Activated B cell treated with CpG ODN at 0.5 μM for 24 hours (primary cell): ENCODE measurements at regions of chr2 and their contacts with region 1.

Region 1: GRCh38 chr2:68909793-68910674 is 38.8 kb upstream of the BMP10 start:
- DNase-seq: peak; percentile 45
- ATAC-seq: peak; percentile 58
- H3K4me3 Mint-ChIP-seq: no peak overlapping the region
- H3K27ac Mint-ChIP-seq: peak overlapping the region; percentile 60
- H3K4me1 Mint-ChIP-seq: peaks cover 34% of the 10 kb centered on the region
- H3K27me3 Mint-ChIP-seq: no peaks in the 10 kb centered on the region
- CTCF ChIP-seq: no peak

Region 2: DNA sequence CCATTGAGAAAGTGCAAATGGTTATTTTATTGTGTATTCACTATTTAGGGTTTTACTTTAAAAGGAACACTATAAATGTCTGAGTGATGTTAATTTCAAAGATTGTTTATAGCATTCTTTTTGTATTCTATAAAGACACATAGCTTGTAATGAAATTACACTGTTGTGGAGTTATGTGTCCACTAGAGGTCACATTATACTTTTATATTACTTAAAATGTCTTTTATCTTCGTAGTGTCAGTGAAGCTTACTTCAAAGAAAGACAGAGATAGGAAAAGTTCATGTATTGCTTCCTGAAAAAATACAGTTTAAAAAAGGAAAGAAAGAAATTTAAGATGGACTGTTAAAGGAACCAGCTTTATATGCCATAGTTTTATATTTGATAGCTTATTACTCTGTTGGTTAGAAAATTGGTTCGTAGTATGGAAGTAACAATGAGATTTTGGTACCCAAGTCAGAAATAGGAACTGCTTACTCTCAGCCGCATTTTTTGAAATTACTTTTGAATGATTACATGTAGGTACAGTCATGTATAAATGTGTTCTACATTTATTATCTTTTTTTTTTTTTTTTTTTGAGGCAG is 422.2 kb before region 1 on chr2:
- CTCF ChIA-PET with region 1: interaction called, 28 read pairs
- POLR2A ChIA-PET with region 1: interaction called, 15 read pairs
- intact Hi-C with region 1: loop called (anchors 1 kb)
- DNase-seq: no peak
- ATAC-seq: peak; percentile 54
- H3K4me3 Mint-ChIP-seq: no peak overlapping the region
- H3K27ac Mint-ChIP-seq: no peak overlapping the region
- H3K4me1 Mint-ChIP-seq: peaks cover 5% of the 10 kb centered on the region
- H3K27me3 Mint-ChIP-seq: no peaks in the 10 kb centered on the region
- CTCF ChIP-seq: peak; percentile 39

Region 3: DNA sequence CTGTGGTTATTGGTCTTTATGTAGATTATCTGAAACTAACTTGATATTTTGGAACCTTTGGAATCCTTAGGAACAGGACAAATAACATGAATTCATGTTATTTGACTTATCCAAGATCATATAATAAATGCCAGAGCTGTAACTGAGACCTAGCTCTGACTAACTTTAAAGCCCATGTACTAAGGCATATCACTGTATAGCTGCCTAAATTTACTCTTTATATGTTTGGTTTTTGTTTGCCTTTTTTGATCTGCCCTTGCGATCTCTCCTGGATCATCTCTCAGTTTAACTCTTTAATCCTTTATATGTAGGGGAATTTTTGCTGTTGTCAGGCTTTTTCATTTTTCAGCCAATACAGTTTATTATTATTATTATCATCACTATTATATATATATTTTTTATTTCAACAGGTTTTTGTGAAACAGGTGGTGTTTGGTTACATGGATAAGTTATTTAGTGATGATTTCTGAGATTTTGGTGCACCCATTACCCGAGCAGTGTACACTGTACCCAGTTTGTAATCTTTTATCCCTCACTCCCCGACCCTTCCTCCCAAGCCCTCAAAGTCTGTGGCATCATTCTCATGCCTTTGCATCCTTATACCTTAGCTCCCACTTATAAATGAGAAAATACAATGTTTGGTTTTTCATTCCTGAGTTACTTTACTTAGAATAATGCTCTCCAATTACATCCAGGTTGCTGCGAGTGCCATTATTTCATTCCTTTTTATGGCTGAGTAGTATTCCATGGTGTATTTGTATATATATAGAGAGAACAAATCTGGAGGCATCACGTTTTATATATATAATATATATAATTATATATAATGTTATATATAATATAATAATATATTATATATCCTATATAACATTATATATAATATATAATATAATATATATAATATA is 393.7 kb before region 1 on chr2:
- CTCF ChIA-PET with region 1: no interaction called
- POLR2A ChIA-PET with region 1: no interaction called
- intact Hi-C with region 1: no loop called
- DNase-seq: no peak
- ATAC-seq: no peak
- H3K4me3 Mint-ChIP-seq: no peak overlapping the region
- H3K27ac Mint-ChIP-seq: no peak overlapping the region
- H3K4me1 Mint-ChIP-seq: no peaks in the 10 kb centered on the region
- H3K27me3 Mint-ChIP-seq: no peaks in the 10 kb centered on the region
- CTCF ChIP-seq: no peak

Region 4: DNA sequence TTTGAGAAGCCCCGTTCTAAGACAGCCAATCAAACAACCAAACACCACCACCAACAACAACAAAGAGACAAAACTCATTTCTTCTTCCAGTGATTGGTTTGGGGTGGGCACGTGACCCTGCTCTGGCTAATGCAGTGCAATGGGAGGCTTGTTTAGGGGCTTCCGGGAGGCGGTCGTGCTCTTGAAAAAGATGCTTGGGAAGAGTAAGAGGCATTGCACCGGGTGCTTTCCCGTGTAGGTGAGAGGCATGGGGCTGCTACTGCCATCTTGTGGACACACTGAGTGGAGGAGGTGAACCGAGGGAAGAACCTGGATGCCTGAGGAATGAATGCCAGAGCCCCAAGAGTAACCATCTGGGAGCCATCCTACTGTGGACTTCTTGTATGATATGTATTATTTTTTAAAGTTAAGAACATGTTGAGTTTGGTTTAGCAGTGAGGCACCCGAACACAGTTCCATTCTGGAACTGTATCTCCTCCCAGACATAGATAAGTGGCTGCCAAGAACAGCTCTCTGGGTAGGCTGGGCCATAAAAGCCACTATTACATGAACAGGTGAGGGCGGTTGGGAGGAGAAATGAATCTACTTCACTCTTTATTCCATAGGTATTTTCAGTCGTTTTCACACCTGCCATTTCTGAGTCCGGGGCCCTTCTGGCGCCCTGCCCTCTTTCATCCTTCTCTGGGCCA is 194.5 kb before region 1 on chr2:
- CTCF ChIA-PET with region 1: interaction called, 72 read pairs
- POLR2A ChIA-PET with region 1: interaction called, 9 read pairs
- intact Hi-C with region 1: loop called (anchors 1 kb)
- DNase-seq: no peak
- ATAC-seq: peak; percentile 51
- H3K4me3 Mint-ChIP-seq: peak overlapping the region; percentile 21
- H3K27ac Mint-ChIP-seq: peak overlapping the region; percentile 89
- H3K4me1 Mint-ChIP-seq: peaks cover 82% of the 10 kb centered on the region
- H3K27me3 Mint-ChIP-seq: no peaks in the 10 kb centered on the region
- CTCF ChIP-seq: no peak

Region 5: DNA sequence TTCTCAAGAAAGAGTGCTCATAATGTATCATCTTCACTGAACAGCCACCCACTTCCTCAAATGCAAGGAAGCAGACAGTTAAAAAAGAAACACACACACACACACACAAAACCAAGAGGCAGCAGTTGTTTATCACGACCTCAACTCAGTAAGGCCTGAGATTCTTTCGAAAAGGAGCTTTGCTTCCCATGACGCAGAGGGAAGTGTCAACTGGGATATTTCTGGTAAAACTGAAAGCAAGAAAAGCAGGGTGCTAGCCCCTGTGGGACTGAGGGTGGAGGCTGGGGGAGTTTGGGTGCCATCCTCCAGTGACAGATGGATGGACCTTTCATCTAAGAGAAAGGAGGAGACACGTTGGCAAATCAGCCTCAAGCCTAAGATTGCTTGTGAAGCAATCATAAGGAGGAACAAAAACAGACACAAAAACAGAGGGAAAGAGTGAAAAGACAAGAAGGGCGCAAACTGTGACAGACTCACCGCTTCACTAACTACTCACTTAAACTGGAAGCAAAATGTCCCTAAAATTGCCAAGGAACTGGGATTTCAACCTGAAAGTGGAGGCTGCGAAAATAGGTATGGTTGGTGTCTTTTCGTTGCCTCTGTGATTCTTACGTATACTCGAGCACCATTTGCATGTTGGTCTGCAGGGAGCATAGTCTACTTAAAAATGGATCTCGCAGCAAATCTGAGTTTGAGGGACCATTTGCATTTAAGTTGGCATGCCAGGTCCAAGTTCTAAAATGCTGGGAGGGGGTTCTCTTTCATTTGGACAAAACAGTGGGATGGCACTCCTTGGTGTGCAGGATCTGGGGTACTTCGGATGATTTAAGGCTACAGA is 175.1 kb before region 1 on chr2 and contains the start of gene ARHGAP25:
- CTCF ChIA-PET with region 1: interaction called, 6 read pairs
- POLR2A ChIA-PET with region 1: interaction called, 32 read pairs
- intact Hi-C with region 1: loop called (anchors 1 kb)
- DNase-seq: peak; percentile 45
- ATAC-seq: peak; percentile 74
- H3K4me3 Mint-ChIP-seq: no peak within 1 kb of the TSS
- H3K27ac Mint-ChIP-seq: no peak within 1 kb of the TSS
- H3K4me1 Mint-ChIP-seq: peaks cover 37% of the 10 kb centered on the region
- H3K27me3 Mint-ChIP-seq: no peaks in the 10 kb centered on the region
- CTCF ChIP-seq: no peak
- total RNA-seq, gene ARHGAP25: 324 and 336 TPM in 2 replicates

Region 6: GRCh38 chr2:68766376-68766845 is 143.6 kb before region 1 on chr2:
- CTCF ChIA-PET with region 1: interaction called, 7 read pairs
- POLR2A ChIA-PET with region 1: interaction called, 18 read pairs
- intact Hi-C with region 1: no loop called
- DNase-seq: no peak
- ATAC-seq: peak; percentile 41
- H3K4me3 Mint-ChIP-seq: peak overlapping the region; percentile 67
- H3K27ac Mint-ChIP-seq: peak overlapping the region; percentile 96
- H3K4me1 Mint-ChIP-seq: peaks cover 98% of the 10 kb centered on the region
- H3K27me3 Mint-ChIP-seq: no peaks in the 10 kb centered on the region
- CTCF ChIP-seq: no peak

Region 7: GRCh38 chr2:68807821-68808266 is 102.2 kb before region 1 on chr2:
- CTCF ChIA-PET with region 1: interaction called, 6 read pairs
- POLR2A ChIA-PET with region 1: interaction called, 11 read pairs
- intact Hi-C with region 1: loop called (anchors 1 kb)
- DNase-seq: no peak
- ATAC-seq: no peak
- H3K4me3 Mint-ChIP-seq: no peak overlapping the region
- H3K27ac Mint-ChIP-seq: peak overlapping the region; percentile 87
- H3K4me1 Mint-ChIP-seq: peaks cover 64% of the 10 kb centered on the region
- H3K27me3 Mint-ChIP-seq: no peaks in the 10 kb centered on the region
- CTCF ChIP-seq: no peak

Region 8: DNA sequence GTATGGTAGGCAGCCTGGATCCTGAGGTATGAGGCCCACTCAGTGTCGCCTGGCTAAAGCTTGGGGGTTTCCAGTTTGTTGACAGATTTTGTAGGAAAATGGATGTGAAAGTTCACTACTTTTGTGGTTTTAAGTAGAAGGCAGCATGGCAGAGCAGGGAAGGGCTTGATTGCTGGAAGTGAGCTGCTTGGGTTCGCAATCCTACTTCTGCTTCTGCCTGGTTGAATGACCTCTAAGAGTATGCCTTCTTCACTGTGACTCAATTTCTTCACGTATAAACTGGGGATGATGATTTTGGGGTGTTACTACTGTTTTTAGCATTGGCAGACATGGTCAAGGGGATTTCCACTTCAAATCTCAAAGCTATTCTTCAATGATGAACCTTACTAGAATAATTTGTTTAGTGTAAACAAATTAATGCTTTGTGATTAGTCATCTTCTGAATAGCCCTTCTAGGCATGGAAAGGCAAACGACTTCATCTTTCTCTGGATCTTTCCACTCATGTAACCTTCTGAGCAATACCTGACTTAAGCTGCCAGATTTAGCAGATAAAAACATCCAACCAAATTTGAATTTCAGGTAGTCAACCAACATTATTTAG is 52.1 kb before region 1 on chr2:
- CTCF ChIA-PET with region 1: interaction called, 8 read pairs
- POLR2A ChIA-PET with region 1: interaction called, 11 read pairs
- intact Hi-C with region 1: loop called (anchors 1 kb)
- DNase-seq: no peak
- ATAC-seq: peak; percentile 94
- H3K4me3 Mint-ChIP-seq: no peak overlapping the region
- H3K27ac Mint-ChIP-seq: peak overlapping the region; percentile 65
- H3K4me1 Mint-ChIP-seq: peaks cover 19% of the 10 kb centered on the region
- H3K27me3 Mint-ChIP-seq: no peaks in the 10 kb centered on the region
- CTCF ChIP-seq: no peak

Region 9: GRCh38 chr2:68951899-68952298 is 41.9 kb after region 1 on chr2:
- CTCF ChIA-PET with region 1: no interaction called
- POLR2A ChIA-PET with region 1: no interaction called
- intact Hi-C with region 1: no loop called
- DNase-seq: no peak
- ATAC-seq: no peak
- H3K4me3 Mint-ChIP-seq: no peak overlapping the region
- H3K27ac Mint-ChIP-seq: no peak overlapping the region
- H3K4me1 Mint-ChIP-seq: no peaks in the 10 kb centered on the region
- H3K27me3 Mint-ChIP-seq: peaks cover 20% of the 10 kb centered on the region
- CTCF ChIP-seq: no peak

Region 10: GRCh38 chr2:69386789-69387734 is 477.0 kb after region 1 on chr2 and contains the start of gene GFPT1:
- CTCF ChIA-PET with region 1: no interaction called
- POLR2A ChIA-PET with region 1: no interaction called
- intact Hi-C with region 1: no loop called
- DNase-seq: peak; percentile 94
- ATAC-seq: peak; percentile 97
- H3K4me3 Mint-ChIP-seq: peak within 1 kb of the TSS; percentile 88
- H3K27ac Mint-ChIP-seq: peak within 1 kb of the TSS; percentile 81
- H3K4me1 Mint-ChIP-seq: peaks cover 38% of the 10 kb centered on the region
- H3K27me3 Mint-ChIP-seq: no peaks in the 10 kb centered on the region
- CTCF ChIP-seq: no peak
- total RNA-seq, gene GFPT1: 11.5 and 14.9 TPM in 2 replicates